Left cardiac atrium (tissue), 4 donors: ENCODE measurements at regions of chr9 and their contacts with region 1.

Region 1: DNA sequence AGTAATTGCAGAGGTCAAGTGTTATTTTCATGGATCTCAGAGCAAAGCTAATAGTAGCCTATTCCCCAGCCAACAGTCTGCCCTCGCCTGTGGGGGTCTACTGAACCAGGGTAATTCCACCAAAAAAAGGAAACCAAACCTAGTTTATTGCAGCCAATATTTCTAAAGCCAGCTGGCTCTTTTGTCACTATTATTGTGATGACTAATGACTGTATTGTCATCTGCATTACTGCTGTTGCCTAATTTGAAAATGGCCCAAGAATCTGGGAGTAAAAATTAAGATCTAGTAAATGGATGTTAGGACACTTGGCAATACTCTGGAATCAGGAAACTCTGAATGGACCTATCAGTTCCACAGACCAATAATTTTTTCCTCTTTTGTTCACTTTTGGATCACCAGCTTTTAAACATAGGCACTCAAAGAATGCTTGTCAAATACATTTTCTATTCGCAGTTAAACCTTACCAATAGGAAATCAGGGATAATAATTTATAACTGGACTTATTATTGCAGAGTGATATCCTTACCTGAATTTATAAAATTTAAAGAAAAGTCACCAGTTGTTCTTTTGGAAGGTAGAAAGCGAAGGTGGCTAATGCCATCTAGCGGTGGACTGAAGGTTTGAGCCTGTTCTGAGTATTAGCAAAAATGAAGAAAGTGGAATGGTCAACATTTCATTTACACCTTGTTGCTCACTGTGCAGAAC is 69.2 kb downstream of the SYK start:
- DNase-seq: no peak
- ATAC-seq: peak in 1 of 2 donors; percentile 44

Region 2: DNA sequence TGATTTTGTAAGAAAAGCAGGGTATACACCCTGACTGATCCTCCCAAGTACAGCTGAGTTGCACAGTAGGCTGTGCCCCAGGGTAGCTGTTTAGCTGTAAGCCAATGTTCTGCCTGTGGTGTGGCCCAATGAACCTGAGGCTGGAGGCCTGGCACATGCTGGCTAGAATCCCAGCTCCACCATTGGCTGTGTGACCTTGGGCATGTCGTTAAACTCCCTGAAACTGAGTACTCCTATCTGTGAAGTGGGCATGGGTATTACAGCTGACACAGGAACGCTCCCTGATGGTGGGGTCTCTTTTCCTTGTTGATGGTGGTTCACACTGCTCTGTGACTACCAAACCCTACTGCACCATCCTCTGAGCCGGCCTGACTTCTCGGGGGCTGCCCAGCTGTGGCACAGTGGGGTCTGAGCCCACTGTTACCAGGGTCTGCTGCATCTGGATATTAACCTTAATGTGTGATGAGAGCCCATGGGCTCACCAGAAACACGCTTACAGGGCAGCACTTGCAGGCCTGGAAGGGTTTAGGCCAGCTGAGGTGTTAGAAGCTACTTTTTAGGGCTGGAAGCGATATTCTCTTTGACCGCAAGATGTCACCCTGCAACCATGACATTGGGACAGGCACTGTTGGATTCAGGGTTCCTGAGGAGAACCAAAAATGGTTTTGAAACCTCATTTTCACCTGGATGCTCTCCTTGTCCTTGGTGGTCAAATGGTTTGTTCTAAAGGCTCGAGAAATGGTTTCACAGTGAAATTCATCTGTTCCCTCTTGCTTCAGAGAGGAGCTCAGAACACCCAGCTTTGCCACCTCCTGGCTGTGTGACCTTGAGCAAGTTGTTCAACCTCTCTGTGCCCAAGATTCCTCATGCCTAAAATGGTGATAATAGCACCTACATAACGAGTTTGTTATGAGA is 1272.8 kb before region 1 on chr9:
- intact Hi-C with region 1: loop called in 1 of 2 experiments (anchors 5 kb)
- DNase-seq: peak; percentile 40
- ATAC-seq: peak; percentile 44 to 63

Region 3: GRCh38 chr9:90142580-90142979 is 728.2 kb before region 1 on chr9:
- intact Hi-C with region 1: loop called (anchors 5 kb)
- DNase-seq: peak; percentile 42
- ATAC-seq: no peak

Region 4: GRCh38 chr9:90219548-90220118 is 651.1 kb before region 1 on chr9:
- intact Hi-C with region 1: loop called (anchors 10 kb)
- DNase-seq: no peak
- ATAC-seq: no peak

Region 5: DNA sequence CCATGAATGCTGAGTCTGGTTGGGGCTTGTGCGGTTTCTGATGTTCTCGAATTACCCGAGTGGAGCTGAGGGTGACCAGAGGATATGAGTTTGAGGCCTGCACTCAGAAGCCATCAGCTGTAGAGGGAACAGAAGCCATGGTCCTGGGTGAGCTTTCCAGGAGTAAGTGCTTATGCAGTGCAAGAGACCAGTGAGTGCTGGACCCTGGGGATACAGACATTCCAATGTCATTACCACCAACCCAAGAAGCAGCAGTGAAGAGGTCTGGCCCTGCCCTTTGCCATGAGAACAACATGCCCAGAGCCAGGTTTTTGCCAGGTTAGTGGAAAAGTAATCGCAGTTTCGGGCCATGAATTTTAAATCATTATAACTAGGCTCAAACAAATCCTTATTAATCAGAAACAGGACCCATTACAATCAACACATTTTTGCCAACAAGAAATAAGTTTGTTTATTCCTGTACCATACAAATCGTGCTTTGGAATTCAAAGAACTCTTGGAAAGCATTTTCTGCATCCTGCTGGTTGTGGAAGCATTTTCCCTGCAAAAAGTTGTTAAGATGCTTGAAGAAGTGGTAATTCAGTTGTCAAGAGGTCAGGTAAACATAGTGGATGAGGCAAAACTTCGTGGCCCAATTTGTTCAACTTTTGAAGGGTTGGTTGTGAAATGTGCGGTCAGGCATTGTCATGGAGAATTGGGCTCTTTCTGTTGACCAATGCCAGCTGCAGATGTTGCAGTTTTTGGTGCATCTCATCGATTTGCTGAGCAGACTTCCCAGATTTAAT is 85.4 kb after region 1 on chr9:
- intact Hi-C with region 1: no loop called
- DNase-seq: no peak
- ATAC-seq: no peak

Region 6: GRCh38 chr9:91266448-91266847 is 395.7 kb after region 1 on chr9:
- intact Hi-C with region 1: no loop called
- DNase-seq: no peak
- ATAC-seq: no peak